Sigmoid colon (tissue), 7 donors: ENCODE measurements at regions of chr7 and their contacts with region 1.

Region 1: GRCh38 chr7:14717816-14718215 is 184.7 kb downstream of the DGKB start:
- DNase-seq: no peak
- H3K4me3 ChIP-seq: no peak overlapping the region
- H3K27ac ChIP-seq: no peak overlapping the region
- H3K4me1 ChIP-seq: peaks cover 0 to 13% (median 0%) of the 10 kb centered on the region in 4 donors
- H3K27me3 ChIP-seq: no peaks in the 10 kb centered on the region
- CTCF ChIP-seq: peak in 3 of 4 experiments; percentile 36 to 59 (median 53)
- EP300 ChIP-seq: no peak
- POLR2A ChIP-seq: no peak

Region 2: DNA sequence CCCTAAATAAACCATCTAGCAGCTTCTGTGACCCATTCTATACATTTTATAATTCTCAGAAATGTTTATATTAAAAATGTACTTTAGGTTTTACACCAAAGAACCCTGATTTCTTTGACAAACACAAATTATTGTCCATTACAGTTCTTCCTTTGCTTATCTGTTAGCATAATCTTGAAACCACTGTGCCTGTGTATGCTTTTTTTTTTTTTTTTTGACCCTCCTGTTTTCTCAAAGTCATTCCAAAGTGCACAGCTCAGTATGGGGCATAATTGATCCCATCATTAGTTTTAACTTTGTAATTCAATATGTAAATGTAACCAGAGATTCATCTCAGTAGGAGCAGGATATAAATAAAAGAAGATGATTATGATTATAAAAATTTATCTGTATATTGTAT is 44.6 kb before region 1 on chr7:
- intact Hi-C with region 1: no loop called
- DNase-seq: no peak
- H3K4me3 ChIP-seq: no peak overlapping the region
- H3K27ac ChIP-seq: no peak overlapping the region
- H3K4me1 ChIP-seq: no peaks in the 10 kb centered on the region
- H3K27me3 ChIP-seq: no peaks in the 10 kb centered on the region
- CTCF ChIP-seq: no peak
- EP300 ChIP-seq: no peak
- POLR2A ChIP-seq: no peak

Region 3: DNA sequence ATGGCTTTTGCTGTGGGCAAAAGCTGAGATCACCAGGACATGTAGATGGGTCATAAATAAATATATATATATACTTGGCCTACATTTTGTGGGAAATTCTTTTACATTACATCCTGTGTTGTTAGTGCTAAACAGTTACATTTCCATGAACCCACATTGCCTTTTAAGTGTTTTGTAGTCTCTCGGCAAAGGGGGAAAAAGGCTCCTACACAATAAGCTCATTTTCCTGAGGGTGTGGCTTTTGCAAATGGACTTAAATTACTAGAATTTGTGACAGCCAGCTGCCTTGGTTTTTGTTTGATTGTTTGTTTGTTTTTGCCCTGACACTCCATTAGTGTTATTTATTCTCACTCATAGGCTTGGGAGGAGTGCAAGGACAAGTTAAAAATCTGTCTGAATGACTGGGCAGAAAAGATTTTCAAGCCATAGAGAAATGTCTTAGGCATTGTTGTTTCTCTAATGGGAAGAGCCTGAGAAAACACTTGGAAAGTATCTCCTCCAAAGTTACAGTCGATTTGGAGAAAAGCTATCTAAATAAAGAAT is 56.0 kb after region 1 on chr7:
- intact Hi-C with region 1: no loop called
- DNase-seq: no peak
- H3K4me3 ChIP-seq: no peak overlapping the region
- H3K27ac ChIP-seq: no peak overlapping the region
- H3K4me1 ChIP-seq: peaks cover 0 to 15% (median 4%) of the 10 kb centered on the region in 4 donors
- H3K27me3 ChIP-seq: no peaks in the 10 kb centered on the region
- CTCF ChIP-seq: no peak
- EP300 ChIP-seq: no peak
- POLR2A ChIP-seq: no peak

Region 4: DNA sequence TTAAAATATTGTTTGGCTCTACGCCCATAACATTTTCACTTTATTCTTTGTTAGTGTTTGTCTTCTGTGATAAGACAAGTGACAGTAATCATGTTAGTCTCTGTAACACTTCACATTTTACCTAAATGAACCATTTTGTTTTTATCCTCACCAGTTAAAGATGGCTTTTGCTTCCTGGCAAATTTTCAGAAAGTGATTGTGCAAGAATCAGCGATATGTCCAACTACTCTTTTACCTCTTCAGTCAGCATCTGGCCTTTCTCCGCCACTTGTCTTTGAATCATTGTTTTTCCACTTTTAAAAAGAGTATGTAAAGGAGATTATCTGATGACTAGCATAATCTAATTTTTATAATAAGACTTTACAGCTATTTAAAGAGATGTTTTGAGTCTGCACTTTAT is 181.2 kb after region 1 on chr7:
- intact Hi-C with region 1: loop called (anchors 10 kb)
- DNase-seq: no peak
- H3K4me3 ChIP-seq: no peak overlapping the region
- H3K27ac ChIP-seq: peak overlapping the region; percentile 13 to 65 (median 44)
- H3K4me1 ChIP-seq: peaks cover 0 to 22% (median 16%) of the 10 kb centered on the region in 4 donors
- H3K27me3 ChIP-seq: no peaks in the 10 kb centered on the region
- CTCF ChIP-seq: no peak
- EP300 ChIP-seq: no peak
- POLR2A ChIP-seq: no peak

Region 5: GRCh38 chr7:15015545-15016326 is 297.9 kb after region 1 on chr7:
- intact Hi-C with region 1: loop called (anchors 1 kb)
- DNase-seq: no peak
- H3K4me3 ChIP-seq: peak overlapping the region in 2 of 4 donors; percentile 5 to 6
- H3K27ac ChIP-seq: peak overlapping the region in 2 of 4 donors; percentile 30 to 33
- H3K4me1 ChIP-seq: peaks cover 0 to 18% (median 14%) of the 10 kb centered on the region in 4 donors
- H3K27me3 ChIP-seq: no peaks in the 10 kb centered on the region
- CTCF ChIP-seq: peak; percentile 25 to 75 (median 58)
- EP300 ChIP-seq: no peak
- POLR2A ChIP-seq: no peak

Region 6: GRCh38 chr7:15305002-15305600 is 587.3 kb after region 1 on chr7:
- intact Hi-C with region 1: loop called (anchors 10 kb)
- DNase-seq: peak; percentile 72
- H3K4me3 ChIP-seq: no peak overlapping the region
- H3K27ac ChIP-seq: no peak overlapping the region
- H3K4me1 ChIP-seq: no peaks in the 10 kb centered on the region
- H3K27me3 ChIP-seq: no peaks in the 10 kb centered on the region
- CTCF ChIP-seq: peak; percentile 34 to 73 (median 60)
- EP300 ChIP-seq: no peak
- POLR2A ChIP-seq: no peak

Region 7: GRCh38 chr7:16071246-16071857 is 1353.5 kb after region 1 on chr7:
- intact Hi-C with region 1: loop called (anchors 10 kb)
- DNase-seq: no peak
- H3K4me3 ChIP-seq: no peak overlapping the region
- H3K27ac ChIP-seq: no peak overlapping the region
- H3K4me1 ChIP-seq: peaks cover 0 to 20% (median 9%) of the 10 kb centered on the region in 4 donors
- H3K27me3 ChIP-seq: no peaks in the 10 kb centered on the region
- CTCF ChIP-seq: peak; percentile 69 to 94 (median 85)
- EP300 ChIP-seq: no peak
- POLR2A ChIP-seq: no peak